Panc1 (cell line): ENCODE measurements at regions of chr11 and their contacts with region 1.

Region 1: GRCh38 chr11:33329705-33330329 is 72.6 kb downstream of the HIPK3 start:
- DNase-seq: peak; percentile 38
- ATAC-seq: peak; percentile 94
- H3K4me3 ChIP-seq: no peak overlapping the region
- H3K27ac ChIP-seq: no peak overlapping the region
- H3K4me1 ChIP-seq: 0 out of 2 replicates have a peak, but pooled peaks cover 4% of the 10 kb centered on the region
- H3K27me3 ChIP-seq: no peaks in the 10 kb centered on the region
- CTCF ChIP-seq: peak; percentile 75

Region 2: DNA sequence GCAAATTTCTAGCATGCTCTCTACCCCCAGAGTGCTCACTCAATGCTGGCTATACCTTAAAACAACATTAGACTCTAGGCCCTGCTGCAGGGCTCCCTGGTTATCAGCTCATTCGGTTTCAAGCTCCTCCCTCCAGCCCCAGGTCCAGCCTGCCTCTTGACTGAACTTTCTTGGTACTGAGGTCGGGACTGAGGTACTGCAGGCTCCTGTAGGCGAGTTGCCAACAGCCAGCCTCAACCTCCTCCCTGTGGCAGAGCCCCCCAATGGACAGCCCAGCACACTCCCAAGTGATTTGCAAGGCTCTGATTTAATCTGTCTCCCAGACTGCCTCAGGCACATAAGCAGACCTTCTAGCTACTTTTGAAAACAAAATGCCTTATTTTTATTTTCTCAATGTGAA is 819.8 kb before region 1 on chr11:
- CTCF ChIA-PET with region 1: no interaction called
- POLR2A ChIA-PET with region 1: no interaction called
- in situ Hi-C with region 1: no loop called
- intact Hi-C with region 1: no loop called
- DNase-seq: no peak
- ATAC-seq: no peak
- H3K4me3 ChIP-seq: no peak overlapping the region
- H3K27ac ChIP-seq: no peak overlapping the region
- H3K4me1 ChIP-seq: no peaks in the 10 kb centered on the region
- H3K27me3 ChIP-seq: peaks cover 3% of the 10 kb centered on the region; the same call in 1 of the 2 replicates
- CTCF ChIP-seq: no peak

Region 3: GRCh38 chr11:33172996-33173395 is 156.8 kb before region 1 on chr11:
- CTCF ChIA-PET with region 1: no interaction called
- POLR2A ChIA-PET with region 1: no interaction called
- in situ Hi-C with region 1: no loop called
- intact Hi-C with region 1: loop called (anchors 5 kb)
- DNase-seq: no peak
- ATAC-seq: no peak
- H3K4me3 ChIP-seq: no peak overlapping the region
- H3K27ac ChIP-seq: no peak overlapping the region
- H3K4me1 ChIP-seq: no peaks in the 10 kb centered on the region
- H3K27me3 ChIP-seq: no peaks in the 10 kb centered on the region
- CTCF ChIP-seq: no peak

Region 4: DNA sequence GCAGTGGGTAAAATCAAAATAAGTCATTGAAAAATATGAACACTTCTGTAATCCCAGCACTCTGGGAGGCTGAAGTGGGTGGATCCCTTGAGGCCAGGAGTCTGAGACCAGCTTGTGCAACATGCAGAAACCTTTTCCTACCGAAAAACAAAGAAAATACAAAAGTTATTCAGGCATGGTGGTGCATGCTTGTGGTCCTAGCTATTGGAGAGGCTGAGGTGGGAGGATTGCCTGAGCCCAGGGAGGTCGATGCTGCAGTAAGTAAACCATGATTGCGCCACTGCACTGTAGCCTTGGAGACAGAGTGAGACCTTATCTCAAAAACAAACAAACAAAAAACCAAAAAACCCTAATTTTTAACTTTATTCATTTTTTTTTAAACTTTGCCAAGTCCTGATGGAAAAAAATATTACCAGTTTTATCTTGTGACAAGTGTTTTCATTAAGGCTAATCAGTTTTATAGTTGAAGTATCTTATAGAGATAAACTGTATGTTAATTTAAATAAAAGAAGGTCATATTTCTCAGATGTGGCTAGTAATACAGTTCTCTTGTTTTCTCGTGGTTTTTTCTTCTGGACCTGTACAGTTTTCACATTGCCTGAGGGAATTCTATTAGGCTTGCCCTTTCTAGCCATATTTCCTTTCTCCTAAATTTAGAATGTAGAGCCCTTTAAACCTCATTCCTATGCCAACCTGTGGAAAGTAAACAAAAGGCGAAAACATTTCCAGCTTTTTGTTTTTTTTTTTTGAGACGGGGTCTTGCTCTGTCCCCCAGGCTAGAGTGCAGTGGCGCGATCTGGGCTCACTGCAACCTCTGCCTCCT is 63.2 kb before region 1 on chr11:
- CTCF ChIA-PET with region 1: no interaction called
- POLR2A ChIA-PET with region 1: no interaction called
- in situ Hi-C with region 1: no loop called
- intact Hi-C with region 1: loop called (anchors 10 kb)
- DNase-seq: no peak
- ATAC-seq: peak; percentile 71; the same call in 1 of the 2 replicates
- H3K4me3 ChIP-seq: no peak overlapping the region
- H3K27ac ChIP-seq: no peak overlapping the region
- H3K4me1 ChIP-seq: peaks cover 48% of the 10 kb centered on the region
- H3K27me3 ChIP-seq: no peaks in the 10 kb centered on the region
- CTCF ChIP-seq: no peak